Activated T-helper 1 cell treated with anti-CD3 and anti-CD28 coated beads, Interleukin-12 subunit alpha, Interleukin-12 subunit beta, Interleukin-2, Interleukin-4 antibody, amounts not matched to agents 30 ng/mL and 10 ng/mL and 1 ng/mL, durations not matched to agents 14 hours and 24 hours and 36 hours (primary cell): ENCODE measurements at regions of chr1 and their contacts with region 1.

Region 1: DNA sequence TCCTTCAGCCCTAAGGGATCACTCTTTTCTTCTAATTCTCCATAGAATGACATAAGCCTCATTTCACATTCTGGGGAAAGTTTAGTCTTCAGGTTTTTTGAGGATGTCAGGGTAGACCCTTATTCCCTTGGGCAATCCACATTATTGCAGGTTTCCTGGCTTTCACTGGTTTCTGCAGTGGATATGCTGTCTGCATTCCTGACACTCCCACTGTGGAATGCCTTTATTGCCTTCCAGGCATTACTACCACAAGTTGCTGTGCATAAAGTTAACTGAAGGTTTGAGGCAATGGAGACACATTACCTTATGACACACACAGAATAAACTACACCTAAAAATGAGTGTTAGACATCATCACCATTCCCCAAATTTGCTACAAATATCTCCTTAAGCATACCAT is 12.7 kb downstream of the FASLG start:
- DNase-seq: no peak
- H3K4me3 Mint-ChIP-seq: no peak overlapping the region
- H3K27ac Mint-ChIP-seq: peak overlapping the region; percentile 63
- H3K4me1 Mint-ChIP-seq: peaks cover 92% of the 10 kb centered on the region
- H3K27me3 Mint-ChIP-seq: no peaks in the 10 kb centered on the region

Region 2: DNA sequence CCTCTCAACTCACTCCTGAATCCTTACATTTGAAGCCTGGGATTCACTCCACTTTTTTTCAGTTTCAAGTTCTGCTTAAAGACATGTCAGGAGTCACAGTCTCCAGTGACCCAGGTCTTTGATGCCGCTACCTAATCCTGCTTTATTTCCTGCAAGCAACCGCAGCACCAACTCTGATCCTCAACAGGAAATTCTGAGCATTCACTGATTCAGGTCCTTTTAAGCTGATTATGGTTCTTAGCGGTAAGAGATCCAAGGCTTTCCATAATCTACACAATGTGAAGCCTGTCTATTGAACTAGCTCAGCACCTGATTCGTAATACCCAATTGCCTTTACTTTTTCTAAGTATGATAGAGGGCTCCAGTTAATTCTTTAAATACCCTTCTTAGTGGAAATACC is 184.0 kb before region 1 on chr1:
- intact Hi-C with region 1: no loop called
- DNase-seq: no peak
- H3K4me3 Mint-ChIP-seq: no peak overlapping the region
- H3K27ac Mint-ChIP-seq: no peak overlapping the region
- H3K4me1 Mint-ChIP-seq: peaks cover 9% of the 10 kb centered on the region
- H3K27me3 Mint-ChIP-seq: peaks cover 30% of the 10 kb centered on the region

Region 3: GRCh38 chr1:172588296-172589291 is 83.0 kb before region 1 on chr1:
- intact Hi-C with region 1: no loop called
- DNase-seq: no peak
- H3K4me3 Mint-ChIP-seq: peak overlapping the region; percentile 32
- H3K27ac Mint-ChIP-seq: peak overlapping the region; percentile 83
- H3K4me1 Mint-ChIP-seq: peaks cover 20% of the 10 kb centered on the region
- H3K27me3 Mint-ChIP-seq: no peaks in the 10 kb centered on the region

Region 4: GRCh38 chr1:172686143-172686542 is 14.6 kb after region 1 on chr1:
- intact Hi-C with region 1: loop called (anchors 1 kb)
- DNase-seq: no peak
- H3K4me3 Mint-ChIP-seq: no peak overlapping the region
- H3K27ac Mint-ChIP-seq: no peak overlapping the region
- H3K4me1 Mint-ChIP-seq: peaks cover 17% of the 10 kb centered on the region
- H3K27me3 Mint-ChIP-seq: no peaks in the 10 kb centered on the region

Region 5: GRCh38 chr1:172699111-172699510 is 27.5 kb after region 1 on chr1:
- intact Hi-C with region 1: loop called (anchors 1 kb)
- DNase-seq: peak; percentile 72
- H3K4me3 Mint-ChIP-seq: peak overlapping the region; percentile 62
- H3K27ac Mint-ChIP-seq: peak overlapping the region; percentile 88
- H3K4me1 Mint-ChIP-seq: no peaks in the 10 kb centered on the region
- H3K27me3 Mint-ChIP-seq: no peaks in the 10 kb centered on the region

Region 6: DNA sequence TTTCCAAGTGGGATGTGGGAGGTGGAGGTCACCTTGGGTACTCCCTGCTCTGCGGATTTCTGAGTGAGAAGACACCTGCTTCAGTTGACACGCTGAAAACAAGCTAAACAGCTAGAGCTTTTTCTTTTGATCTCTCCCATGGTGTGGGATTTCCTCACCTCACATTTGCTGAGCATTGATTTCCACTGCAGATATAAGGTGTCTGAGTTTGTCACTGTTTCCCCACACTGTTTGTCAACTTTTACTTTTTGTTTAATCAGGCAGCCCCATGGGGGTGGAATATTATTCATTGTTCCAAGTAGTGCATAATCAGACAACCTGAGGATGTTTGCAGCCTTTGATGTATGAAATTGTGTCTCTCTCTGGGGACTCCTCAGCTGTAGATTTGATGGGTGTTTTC is 36.9 kb after region 1 on chr1:
- intact Hi-C with region 1: loop called (anchors 1 kb)
- DNase-seq: peak; percentile 53
- H3K4me3 Mint-ChIP-seq: peak overlapping the region; percentile 50
- H3K27ac Mint-ChIP-seq: peak overlapping the region; percentile 86
- H3K4me1 Mint-ChIP-seq: peaks cover 18% of the 10 kb centered on the region
- H3K27me3 Mint-ChIP-seq: no peaks in the 10 kb centered on the region